Calu3 (cell line): ENCODE measurements at regions of chr10 and their contacts with region 1.

Region 1: GRCh38 chr10:43348511-43349312 is 22.7 kb upstream of the FXYD4 start:
- DNase-seq: peak; percentile 91
- H3K4me3 Mint-ChIP-seq: no peak overlapping the region
- H3K27ac Mint-ChIP-seq: no peak overlapping the region
- H3K4me1 Mint-ChIP-seq: peaks cover 55% of the 10 kb centered on the region
- H3K27me3 Mint-ChIP-seq: no peaks in the 10 kb centered on the region
- CTCF ChIP-seq: peak; percentile 81

Region 2: DNA sequence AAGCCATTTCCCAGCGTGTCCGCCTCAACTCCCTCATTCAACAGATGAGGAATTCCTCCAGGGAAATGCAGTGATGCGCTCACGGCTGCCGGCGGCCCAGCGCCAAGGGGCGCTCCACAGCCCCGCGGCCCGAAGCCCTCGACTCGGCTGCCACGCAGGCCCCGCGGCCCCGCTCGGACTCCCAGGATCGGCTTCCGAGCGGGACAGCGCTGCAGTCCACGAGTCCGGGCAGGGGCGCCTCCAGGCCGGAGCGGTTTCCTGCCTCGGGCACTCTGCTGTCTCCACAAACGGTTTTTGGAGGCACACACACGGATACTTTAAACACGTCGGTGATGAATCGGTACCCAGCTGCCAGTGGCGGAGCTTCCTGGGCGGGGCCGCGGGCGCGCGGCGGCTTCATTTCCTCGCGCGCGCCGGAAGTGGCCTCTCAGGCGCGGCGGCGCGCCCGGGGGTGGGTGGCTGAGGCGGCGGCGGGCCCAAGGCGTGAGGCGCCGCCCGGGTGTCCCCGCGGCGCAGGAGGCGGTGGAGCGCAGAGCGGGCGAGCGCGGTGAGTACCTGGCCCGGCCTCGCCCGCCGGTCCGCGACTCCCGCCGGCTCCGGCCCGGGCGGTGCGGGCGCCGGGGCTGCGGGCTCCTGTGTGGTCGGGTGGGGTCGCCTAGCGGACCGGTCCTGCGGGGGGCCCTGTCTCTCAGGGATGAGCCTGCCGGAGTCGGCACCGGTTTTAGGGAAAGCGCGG is 210.5 kb before region 1 on chr10 and contains the start of gene CSGALNACT2:
- CTCF ChIA-PET with region 1: no interaction called
- intact Hi-C with region 1: loop called (anchors 10 kb)
- DNase-seq: peak; percentile 82
- H3K4me3 Mint-ChIP-seq: peak within 1 kb of the TSS; percentile 83
- H3K27ac Mint-ChIP-seq: peak within 1 kb of the TSS; percentile 79
- H3K4me1 Mint-ChIP-seq: peaks cover 19% of the 10 kb centered on the region
- H3K27me3 Mint-ChIP-seq: peaks cover 23% of the 10 kb centered on the region
- CTCF ChIP-seq: no peak
- total RNA-seq, gene CSGALNACT2: 8.9 and 10.0 TPM in 2 replicates

Region 3: DNA sequence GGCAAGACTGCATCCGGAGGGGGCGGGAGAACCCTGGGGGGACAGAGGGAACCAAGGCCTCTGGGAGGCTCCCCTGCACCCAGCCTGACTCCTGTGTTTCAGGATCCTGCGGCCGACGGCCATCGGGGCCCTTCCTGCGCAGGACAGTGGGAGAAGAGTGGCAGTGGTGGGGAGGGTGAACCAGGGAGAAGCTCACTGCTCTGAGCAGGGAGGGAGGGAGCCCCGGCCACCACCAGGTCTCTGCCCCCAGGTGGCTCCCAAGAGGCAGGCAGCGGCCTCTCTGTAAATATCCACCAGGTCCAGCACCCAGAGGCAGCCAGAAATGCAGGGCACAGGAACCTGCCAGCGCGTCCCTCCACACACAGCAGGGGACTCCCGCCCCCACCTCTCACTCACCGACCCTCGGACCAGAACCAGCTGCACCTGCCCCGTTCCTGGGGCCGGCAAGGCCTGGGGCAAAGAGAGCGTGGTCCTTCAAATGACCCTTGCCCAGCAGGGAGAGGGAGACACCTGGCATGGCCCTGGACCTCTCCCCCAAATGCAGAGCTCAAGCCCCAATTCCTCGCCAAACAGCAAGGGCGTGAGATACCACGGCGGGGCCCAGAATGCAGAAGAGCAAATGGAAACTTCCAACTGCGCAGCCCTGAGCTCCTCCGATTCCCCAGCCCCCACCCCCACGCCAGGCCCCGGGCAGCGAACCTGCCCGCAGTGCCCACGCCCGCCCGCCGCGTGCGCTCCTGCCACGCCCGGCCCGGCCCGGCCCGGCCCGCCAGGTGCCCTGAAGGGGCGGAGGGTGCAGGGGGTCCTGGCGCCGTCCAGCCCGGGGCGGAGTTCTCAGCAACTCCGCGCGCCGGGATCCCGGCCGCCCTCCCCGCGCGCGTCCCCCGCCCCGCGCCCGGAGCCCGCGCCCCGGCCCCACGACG is 82.7 kb before region 1 on chr10:
- CTCF ChIA-PET with region 1: interaction called, 12 read pairs
- intact Hi-C with region 1: loop called (anchors 1 kb)
- DNase-seq: peak; percentile 80
- H3K4me3 Mint-ChIP-seq: peak overlapping the region; percentile 68
- H3K27ac Mint-ChIP-seq: no peak overlapping the region
- H3K4me1 Mint-ChIP-seq: peaks cover 1% of the 10 kb centered on the region
- H3K27me3 Mint-ChIP-seq: peaks cover 64% of the 10 kb centered on the region
- CTCF ChIP-seq: peak; percentile 65

Region 4: GRCh38 chr10:43377424-43377883 is 28.7 kb after region 1 on chr10:
- CTCF ChIA-PET with region 1: interaction called, 3 read pairs
- intact Hi-C with region 1: loop called (anchors 2 kb)
- DNase-seq: peak; percentile 66
- H3K4me3 Mint-ChIP-seq: no peak overlapping the region
- H3K27ac Mint-ChIP-seq: no peak overlapping the region
- H3K4me1 Mint-ChIP-seq: peaks cover 39% of the 10 kb centered on the region
- H3K27me3 Mint-ChIP-seq: no peaks in the 10 kb centered on the region
- CTCF ChIP-seq: peak; percentile 51

Region 5: DNA sequence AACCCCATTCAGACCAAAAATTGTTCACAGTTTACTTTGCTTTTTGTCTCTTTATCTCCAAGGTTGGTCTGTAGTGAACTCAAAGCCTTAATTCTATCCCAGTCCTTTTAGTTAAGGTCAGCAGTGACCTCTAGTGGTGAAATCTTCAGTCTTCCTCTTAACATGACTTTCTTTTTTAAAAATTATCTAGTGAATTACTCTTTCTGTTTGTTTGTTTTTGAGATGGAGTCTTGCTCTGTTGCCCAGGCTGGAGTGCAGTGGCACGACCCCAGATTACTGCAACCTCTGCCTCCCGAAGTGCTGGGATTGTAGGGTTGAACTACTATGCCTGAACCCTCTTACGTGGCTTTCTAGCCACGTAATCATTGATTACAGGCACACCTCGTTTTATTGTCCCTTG is 113.2 kb after region 1 on chr10:
- CTCF ChIA-PET with region 1: no interaction called
- intact Hi-C with region 1: loop called (anchors 5 kb)
- DNase-seq: peak; percentile 48
- H3K4me3 Mint-ChIP-seq: no peak overlapping the region
- H3K27ac Mint-ChIP-seq: no peak overlapping the region
- H3K4me1 Mint-ChIP-seq: no peaks in the 10 kb centered on the region
- H3K27me3 Mint-ChIP-seq: no peaks in the 10 kb centered on the region
- CTCF ChIP-seq: peak; percentile 44